ENCODE measurements at regions of chr11 and their contacts with region 1.

Region 1: DNA sequence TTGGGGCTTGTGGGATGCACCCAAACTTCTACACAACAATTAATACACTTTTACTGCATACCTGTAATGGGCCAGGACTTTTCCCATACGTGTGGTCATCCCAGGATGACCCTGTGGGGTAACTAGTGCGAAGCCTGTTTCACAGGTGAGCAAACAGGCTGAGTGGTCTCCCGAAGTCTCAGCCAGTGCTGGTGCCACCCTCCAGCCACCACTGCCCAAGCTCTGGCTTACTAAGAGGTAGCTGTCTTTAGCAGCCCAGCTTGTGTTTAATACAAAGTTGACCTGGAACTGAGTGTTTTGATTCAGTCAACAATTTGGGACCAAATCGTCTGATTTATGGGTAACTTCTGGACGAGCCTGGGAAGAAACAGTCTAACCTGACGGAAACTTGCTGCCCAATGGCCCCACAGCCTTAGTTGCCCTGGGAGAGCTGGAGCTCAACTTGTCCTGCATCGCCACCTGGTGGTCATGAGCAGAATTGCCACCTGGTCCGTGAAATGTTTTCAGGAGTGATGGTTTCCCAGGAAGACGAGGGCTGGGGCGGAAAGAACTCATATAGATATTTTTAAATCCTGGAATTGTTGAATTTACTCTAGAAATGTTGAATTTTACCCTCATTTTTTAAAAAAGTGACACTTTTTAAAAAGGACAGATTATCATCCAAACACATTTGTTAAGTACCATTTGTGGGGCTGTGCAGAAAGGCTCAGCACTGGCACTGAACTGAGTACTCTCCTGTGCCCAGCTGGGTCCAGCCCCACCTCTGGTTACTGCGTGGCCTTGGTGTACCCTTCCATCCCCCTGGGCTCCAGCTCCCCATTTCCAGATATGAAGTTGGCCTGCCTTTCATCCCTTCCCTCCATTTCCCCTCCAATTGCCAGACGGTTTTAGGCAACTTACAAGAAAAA is 95.5 kb upstream of the PARVA start:
- DNase-seq: peak; percentile 65
- ATAC-seq: peak; percentile 79
- H3K4me3 ChIP-seq: no peak overlapping the region
- H3K27ac ChIP-seq: no peak overlapping the region
- H3K4me1 ChIP-seq: peaks cover 12% of the 10 kb centered on the region
- H3K27me3 ChIP-seq: peaks cover 0 to 9% of the 10 kb centered on the region in 2 experiments; a peak in 2 of 5 replicates
- CTCF ChIP-seq: peak; percentile 94
- EP300 ChIP-seq: no peak
- POLR2A ChIP-seq: no peak
- RAD21 ChIP-seq: peak; percentile 91

Region 2: DNA sequence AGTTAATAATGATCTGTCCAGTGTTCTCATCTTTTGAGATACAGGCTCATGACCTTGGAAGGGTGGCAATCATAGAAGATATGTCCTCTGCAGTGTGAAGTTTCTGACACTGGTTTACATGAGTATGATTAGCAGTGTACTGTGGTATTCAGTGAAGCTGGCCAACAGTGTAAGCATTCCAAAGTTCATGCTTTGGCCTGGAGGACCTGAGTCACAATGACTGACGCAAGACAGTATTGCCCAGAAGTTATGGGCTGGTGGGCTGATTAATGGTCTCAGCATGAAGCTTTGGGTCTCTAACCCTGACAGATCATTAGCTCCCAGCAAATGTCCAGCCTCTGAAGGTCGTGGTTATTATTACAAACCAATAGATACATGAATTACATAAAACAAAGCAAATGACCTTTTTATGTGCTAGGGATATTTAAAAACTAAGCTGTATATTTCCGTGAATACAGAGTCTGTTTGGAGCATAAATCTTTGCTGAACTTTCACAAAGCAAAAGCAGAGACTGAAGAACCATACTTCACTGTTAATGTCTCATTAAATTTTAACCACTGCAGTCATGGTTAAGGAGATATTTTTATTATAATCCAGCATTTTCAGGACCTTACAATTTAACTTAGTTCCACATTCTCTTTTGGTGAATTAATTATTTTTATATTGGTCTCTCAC is 468.4 kb before region 1 on chr11:
- CTCF ChIA-PET with region 1: no interaction called
- POLR2A ChIA-PET with region 1: no interaction called
- in situ Hi-C with region 1: loop called (anchors 25 kb)
- intact Hi-C with region 1: no loop called
- DNase-seq: peak; percentile 94
- ATAC-seq: peak; percentile 99
- H3K4me3 ChIP-seq: peak overlapping the region in 1 of 3 experiments; percentile 12; a peak in 1 of 6 replicates
- H3K27ac ChIP-seq: peak overlapping the region; percentile 66
- H3K4me1 ChIP-seq: peaks cover 31% of the 10 kb centered on the region
- H3K27me3 ChIP-seq: no peaks in the 10 kb centered on the region
- CTCF ChIP-seq: no peak
- EP300 ChIP-seq: peak in 1 of 2 experiments; percentile 72; a peak in 2 of 4 replicates
- POLR2A ChIP-seq: no peak
- RAD21 ChIP-seq: no peak

Region 3: GRCh38 chr11:11993839-11994238 is 288.0 kb before region 1 on chr11:
- CTCF ChIA-PET with region 1: no interaction called
- POLR2A ChIA-PET with region 1: no interaction called
- in situ Hi-C with region 1: no loop called
- intact Hi-C with region 1: no loop called
- DNase-seq: no peak
- ATAC-seq: peak; percentile 60
- H3K4me3 ChIP-seq: no peak overlapping the region
- H3K27ac ChIP-seq: no peak overlapping the region
- H3K4me1 ChIP-seq: peaks cover 36% of the 10 kb centered on the region
- H3K27me3 ChIP-seq: peaks cover 0 to 32% of the 10 kb centered on the region in 2 experiments; a peak in 4 of 5 replicates
- CTCF ChIP-seq: no peak
- EP300 ChIP-seq: no peak
- POLR2A ChIP-seq: no peak
- RAD21 ChIP-seq: no peak

Region 4: DNA sequence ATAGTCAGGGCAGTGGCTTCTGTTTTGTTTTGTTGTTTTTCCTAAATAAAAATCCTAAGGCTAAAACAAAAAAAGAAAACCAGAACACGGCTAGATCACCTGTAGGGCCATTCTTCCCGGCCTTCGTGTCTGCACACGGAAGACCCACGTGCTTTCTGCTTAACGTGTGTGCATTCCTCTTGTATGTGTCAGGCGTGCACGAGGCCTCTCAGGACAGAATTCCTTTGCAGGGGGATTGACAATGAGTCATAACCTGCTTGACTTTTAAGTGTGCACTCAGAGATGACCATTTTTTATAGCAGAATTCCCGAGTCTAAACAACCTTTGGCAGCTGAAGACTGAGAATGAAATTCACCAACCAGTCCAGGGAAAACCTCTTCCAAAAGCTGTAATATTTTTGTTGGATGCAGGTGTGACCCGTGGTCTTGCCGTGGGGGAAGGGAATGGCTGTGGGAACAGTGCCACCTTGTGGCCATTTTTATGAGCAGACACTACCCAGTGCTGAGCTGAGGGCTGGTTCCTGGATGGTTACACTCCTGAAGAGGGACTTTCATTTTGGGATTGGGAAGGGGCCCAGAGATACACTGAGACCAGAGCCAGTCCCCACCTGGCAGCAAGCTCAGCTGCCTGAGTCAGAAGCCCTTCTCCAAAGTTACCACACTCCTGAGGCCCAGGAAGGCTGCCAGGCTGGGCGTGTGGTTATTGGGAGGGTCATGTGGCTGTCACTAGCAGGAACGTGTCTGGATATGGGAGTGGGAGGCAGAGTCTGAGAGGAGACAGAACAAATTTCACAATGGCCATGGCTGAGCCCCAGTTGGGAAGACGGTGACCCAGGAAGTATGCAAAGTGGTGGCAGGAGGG is 237.6 kb before region 1 on chr11:
- CTCF ChIA-PET with region 1: interaction called, 52 read pairs
- POLR2A ChIA-PET with region 1: no interaction called
- in situ Hi-C with region 1: loop called (anchors 5 kb)
- intact Hi-C with region 1: loop called (anchors 1 kb)
- DNase-seq: peak; percentile 87
- ATAC-seq: peak; percentile 89
- H3K4me3 ChIP-seq: peak overlapping the region in 1 of 3 experiments; percentile 50; a peak in 2 of 6 replicates
- H3K27ac ChIP-seq: no peak overlapping the region
- H3K4me1 ChIP-seq: peaks cover 26% of the 10 kb centered on the region
- H3K27me3 ChIP-seq: no peaks in the 10 kb centered on the region; a peak in 1 of 5 replicates
- CTCF ChIP-seq: peak; percentile 94
- EP300 ChIP-seq: peak in 1 of 2 experiments; percentile 32; a peak in 1 of 4 replicates
- POLR2A ChIP-seq: no peak
- RAD21 ChIP-seq: peak; percentile 82

Region 5: DNA sequence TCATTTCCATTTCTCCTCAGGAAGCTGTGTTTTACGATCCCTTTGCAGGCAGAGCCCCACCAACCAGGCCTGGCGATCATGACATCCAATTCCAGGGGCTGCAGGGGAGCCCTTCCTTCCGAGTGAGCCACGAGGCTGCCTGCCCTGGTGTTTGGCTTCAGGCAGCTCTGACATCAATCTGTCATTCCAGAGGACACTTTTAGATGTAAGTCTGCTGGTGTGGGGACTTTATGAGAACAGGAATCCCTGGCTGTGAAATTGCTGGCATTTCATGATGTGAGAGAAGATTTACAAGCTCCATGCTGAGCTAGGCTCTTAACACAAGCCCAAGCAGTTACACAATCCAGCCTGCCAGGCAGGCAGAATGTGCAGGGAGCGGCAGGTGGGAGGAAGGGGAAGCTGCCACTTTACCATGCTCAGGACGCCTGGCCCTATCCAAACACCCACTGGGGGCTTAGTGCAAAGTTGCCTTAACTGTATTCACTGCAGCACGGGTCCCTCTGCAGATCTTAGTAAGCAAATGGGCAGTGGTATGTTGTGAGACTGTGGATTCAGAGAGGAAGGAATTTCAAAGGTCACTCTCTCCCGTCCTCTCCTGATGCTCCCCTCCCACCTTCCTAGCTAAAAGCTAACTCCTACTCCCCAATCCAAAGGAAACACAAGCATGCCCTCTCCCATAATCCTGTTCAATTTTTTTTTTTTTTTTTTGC is 214.9 kb before region 1 on chr11:
- CTCF ChIA-PET with region 1: no interaction called
- POLR2A ChIA-PET with region 1: no interaction called
- in situ Hi-C with region 1: no loop called
- intact Hi-C with region 1: loop called (anchors 5 kb)
- DNase-seq: peak; percentile 50
- ATAC-seq: peak; percentile 69
- H3K4me3 ChIP-seq: peak overlapping the region; percentile 8 to 41 (median 31); a peak in 4 of 6 replicates
- H3K27ac ChIP-seq: peak overlapping the region; percentile 20
- H3K4me1 ChIP-seq: peaks cover 64% of the 10 kb centered on the region
- H3K27me3 ChIP-seq: no peaks in the 10 kb centered on the region
- CTCF ChIP-seq: no peak
- EP300 ChIP-seq: no peak; a peak in 1 of 4 replicates
- POLR2A ChIP-seq: no peak
- RAD21 ChIP-seq: no peak

Region 6: GRCh38 chr11:12122083-12122482 is 159.7 kb before region 1 on chr11:
- CTCF ChIA-PET with region 1: no interaction called
- POLR2A ChIA-PET with region 1: no interaction called
- in situ Hi-C with region 1: no loop called
- intact Hi-C with region 1: loop called (anchors 5 kb)
- DNase-seq: peak; percentile 32
- ATAC-seq: peak; percentile 92
- H3K4me3 ChIP-seq: no peak overlapping the region
- H3K27ac ChIP-seq: no peak overlapping the region
- H3K4me1 ChIP-seq: peaks cover 21% of the 10 kb centered on the region
- H3K27me3 ChIP-seq: no peaks in the 10 kb centered on the region
- CTCF ChIP-seq: peak; percentile 56
- EP300 ChIP-seq: no peak
- POLR2A ChIP-seq: no peak
- RAD21 ChIP-seq: peak; percentile 13; the same call in 1 of the 2 replicates

Measured in HepG2 (cell line).